ENCODE measurements at regions of chr10 and their contacts with region 1.

Region 1: DNA sequence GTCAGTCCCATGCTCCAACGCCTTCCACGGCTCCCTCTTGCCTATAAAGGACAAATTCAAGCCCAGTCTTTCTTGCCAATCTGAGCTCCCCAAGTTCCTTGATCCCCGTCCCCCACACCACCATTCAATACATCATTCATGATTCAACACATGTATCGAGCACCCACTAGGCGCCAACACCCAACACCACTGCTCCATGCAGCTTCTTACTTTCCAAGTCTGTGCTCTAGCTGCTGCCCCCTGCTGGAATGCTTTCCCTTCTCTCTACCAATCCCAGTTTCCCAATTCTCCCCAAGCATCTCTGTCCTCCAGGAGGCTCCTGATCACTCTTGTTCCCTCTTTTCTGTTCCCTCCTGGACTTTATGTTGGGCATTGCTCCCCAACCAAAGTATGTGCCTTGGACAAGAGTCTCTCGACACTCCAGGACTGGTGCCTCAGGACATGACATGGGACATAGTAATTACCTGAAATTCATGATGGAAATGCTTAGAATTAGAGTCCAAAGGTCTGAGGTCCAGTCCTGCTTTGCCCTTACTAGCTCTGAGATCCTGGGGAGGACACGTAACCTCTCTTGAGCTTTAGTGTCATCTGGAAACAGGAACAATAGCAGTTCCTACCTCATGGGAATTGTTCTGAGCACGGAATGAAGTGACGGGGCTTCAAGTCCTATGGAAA is 172.7 kb downstream of the NEURL1 start:
- DNase-seq: peak; percentile 37
- H3K4me3 Mint-ChIP-seq: no peak overlapping the region
- H3K27ac Mint-ChIP-seq: no peak overlapping the region
- H3K4me1 Mint-ChIP-seq: peaks cover 8% of the 10 kb centered on the region
- H3K27me3 Mint-ChIP-seq: no peaks in the 10 kb centered on the region
- CTCF ChIP-seq: no peak

Region 2: DNA sequence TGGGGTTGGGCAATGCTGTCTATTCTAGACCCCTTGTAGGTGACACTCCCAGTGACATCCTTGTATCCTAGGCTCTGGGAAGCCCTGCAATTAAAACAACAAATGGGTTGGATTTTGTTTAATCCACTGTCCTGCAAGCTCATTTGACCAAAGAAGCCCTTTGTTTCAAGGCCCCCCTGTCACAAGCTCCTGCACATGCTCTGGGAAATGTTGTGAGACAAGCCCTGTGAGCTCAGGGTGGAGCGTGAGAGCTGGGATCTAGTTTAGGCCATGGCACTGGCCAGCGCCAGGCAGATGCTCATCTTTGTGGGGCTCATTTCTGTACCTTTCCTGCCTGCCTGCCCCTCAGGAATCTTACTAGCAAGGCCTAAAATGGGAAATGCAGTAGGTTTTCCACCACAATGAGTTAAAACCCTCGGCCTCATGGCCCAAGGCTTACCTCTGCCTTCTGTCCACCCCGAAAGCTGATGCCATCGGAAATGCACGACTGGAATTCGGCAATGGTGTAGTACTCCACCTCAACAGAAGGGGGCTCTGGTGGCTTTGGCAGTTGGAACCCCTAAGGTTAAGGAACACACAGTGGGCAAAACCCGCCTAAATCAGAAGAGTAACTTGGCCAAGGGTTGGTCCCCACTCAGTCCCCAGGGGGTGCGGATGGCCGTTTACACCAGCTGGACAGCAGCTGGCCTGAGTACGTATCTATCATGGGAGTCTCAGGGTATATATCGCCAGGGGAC is 60.7 kb before region 1 on chr10:
- CTCF ChIA-PET with region 1: interaction called, 13 read pairs
- POLR2A ChIA-PET with region 1: no interaction called
- intact Hi-C with region 1: no loop called
- DNase-seq: peak; percentile 52
- H3K4me3 Mint-ChIP-seq: no peak overlapping the region
- H3K27ac Mint-ChIP-seq: no peak overlapping the region
- H3K4me1 Mint-ChIP-seq: no peaks in the 10 kb centered on the region
- H3K27me3 Mint-ChIP-seq: no peaks in the 10 kb centered on the region
- CTCF ChIP-seq: peak; percentile 66